ENCODE measurements at regions of chr16 and their contacts with region 1.

Region 1: GRCh38 chr16:70380861-70381603 is 34.3 kb downstream of the DDX19A start:
- DNase-seq: peak; percentile 96
- ATAC-seq: peak; percentile 97

Region 2: GRCh38 chr16:70438969-70439862 is 58.2 kb after region 1 on chr16 and contains the start of gene ST3GAL2:
- intact Hi-C with region 1: loop called (anchors 1 kb)
- DNase-seq: peak; percentile 98
- ATAC-seq: peak; percentile 98
- total RNA-seq, gene ST3GAL2: 25.6 TPM

Measured in Right ventricle myocardium inferior (tissue), 1 donor.